ENCODE measurements at regions of chr5 and their contacts with region 1.

Region 1: DNA sequence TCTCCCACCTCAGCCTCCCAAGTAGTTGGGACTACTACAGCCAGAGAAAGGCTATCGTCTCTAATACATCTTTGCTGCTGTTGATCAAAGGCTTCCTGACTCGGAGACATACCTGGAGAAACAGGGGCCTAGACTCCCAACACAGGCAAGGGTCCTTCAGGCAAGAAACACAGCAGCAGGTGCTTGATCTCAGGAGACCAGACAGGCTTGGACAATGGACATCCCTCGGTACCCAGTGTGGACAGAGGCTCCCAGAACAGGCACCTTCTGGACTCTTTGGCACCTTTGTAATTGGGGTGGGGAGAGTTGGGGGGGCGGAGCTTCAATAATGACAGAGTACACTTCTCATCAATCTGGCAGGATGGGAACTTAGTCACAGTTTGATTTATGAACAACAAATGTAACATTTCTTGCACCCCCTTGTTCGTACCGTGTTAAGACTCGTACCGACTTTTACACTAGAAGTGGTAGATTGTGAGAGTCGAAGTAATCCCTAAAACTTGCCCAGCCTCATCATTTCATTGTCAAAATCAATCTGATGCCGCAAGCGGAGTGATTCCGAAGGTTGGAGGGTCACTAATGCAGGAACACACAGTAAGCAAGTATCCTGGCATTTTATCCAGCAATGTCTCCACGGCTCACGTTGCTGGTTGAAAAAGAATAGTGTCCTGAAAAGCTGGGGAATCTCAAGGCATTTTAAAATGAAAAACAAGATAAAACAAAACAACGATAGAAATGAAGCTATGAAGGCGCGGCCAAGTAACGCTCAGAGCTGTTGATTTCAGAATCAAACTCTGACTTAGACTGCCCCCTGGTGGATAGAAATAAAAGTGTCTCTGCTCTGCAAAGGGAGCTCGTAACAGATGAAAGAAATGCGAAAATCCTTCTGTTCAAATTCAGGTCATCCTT is 46.4 kb upstream of the STK32A start:
- DNase-seq: peak in 7 of 9 experiments; percentile 2 to 73 (median 33)
- ATAC-seq: peak; percentile 59
- H3K4me3 ChIP-seq: no peak overlapping the region
- H3K4me3 Mint-ChIP-seq: no peak overlapping the region
- H3K27ac ChIP-seq: no peak overlapping the region
- H3K27ac Mint-ChIP-seq: no peak overlapping the region
- H3K4me1 ChIP-seq: no peaks in the 10 kb centered on the region
- H3K4me1 Mint-ChIP-seq: peaks cover 6% of the 10 kb centered on the region
- H3K27me3 ChIP-seq: no peaks in the 10 kb centered on the region
- H3K27me3 Mint-ChIP-seq: peaks cover 10% of the 10 kb centered on the region
- CTCF ChIP-seq: peak; percentile 85

Region 2: DNA sequence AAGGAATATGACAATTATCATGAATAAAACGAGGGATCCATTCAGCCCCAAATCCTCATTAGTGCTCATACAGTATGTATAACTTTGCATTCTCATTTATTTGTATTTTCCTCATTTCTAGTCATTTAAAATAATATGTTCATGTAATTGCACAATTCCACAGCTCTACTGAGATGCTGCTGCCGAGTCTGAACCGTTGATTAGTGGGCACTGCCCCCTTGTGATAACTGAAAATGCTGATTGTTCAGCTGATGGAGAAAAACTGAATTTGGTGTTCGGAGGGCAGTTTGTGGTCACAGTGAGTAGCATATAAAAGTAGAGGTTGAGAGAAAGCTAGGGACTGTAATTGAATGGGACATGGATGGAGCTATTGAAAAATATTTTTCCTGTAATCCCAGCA is 660.2 kb before region 1 on chr5:
- CTCF ChIA-PET with region 1: interaction called, 16 read pairs
- POLR2A ChIA-PET with region 1: no interaction called
- intact Hi-C with region 1: loop called (anchors 1 kb)
- DNase-seq: no peak
- ATAC-seq: no peak
- H3K4me3 ChIP-seq: no peak overlapping the region
- H3K4me3 Mint-ChIP-seq: no peak overlapping the region
- H3K27ac ChIP-seq: no peak overlapping the region
- H3K27ac Mint-ChIP-seq: no peak overlapping the region
- H3K4me1 ChIP-seq: no peaks in the 10 kb centered on the region
- H3K4me1 Mint-ChIP-seq: peaks cover under 1% of the 10 kb centered on the region
- H3K27me3 ChIP-seq: no peaks in the 10 kb centered on the region
- H3K27me3 Mint-ChIP-seq: peaks cover 2% of the 10 kb centered on the region
- CTCF ChIP-seq: no peak

Region 3: DNA sequence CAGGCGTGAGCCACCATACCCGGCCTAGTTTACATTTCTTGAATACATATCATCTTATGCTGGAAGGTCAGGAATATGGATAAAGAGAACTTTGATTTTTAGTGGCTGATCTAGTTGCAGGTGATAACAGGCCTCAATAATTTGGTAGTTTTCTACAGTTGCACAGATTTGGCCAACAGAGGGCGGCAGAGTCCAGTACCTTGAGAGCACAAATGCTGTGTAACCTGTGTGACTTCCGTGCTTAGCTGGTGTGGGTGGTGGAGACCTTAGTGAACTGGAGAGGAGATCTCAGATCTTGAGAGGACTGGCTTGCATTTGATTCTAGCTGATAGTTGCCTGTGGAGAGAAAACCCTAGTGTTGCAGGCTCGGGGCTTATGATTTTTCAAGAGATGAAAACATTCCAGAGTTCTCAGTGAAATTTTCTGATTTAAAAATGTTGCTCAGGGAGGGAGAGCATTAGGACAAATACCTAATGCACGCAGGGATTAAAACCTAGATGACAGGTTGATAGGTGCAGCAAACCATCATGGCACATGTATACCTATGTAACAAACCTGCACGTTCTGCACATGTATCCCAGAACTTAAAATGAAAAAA is 655.1 kb before region 1 on chr5:
- CTCF ChIA-PET with region 1: interaction called, 16 read pairs
- POLR2A ChIA-PET with region 1: no interaction called
- intact Hi-C with region 1: loop called (anchors 1 kb)
- DNase-seq: peak; percentile 51 to 79 (median 71)
- ATAC-seq: peak; percentile 85
- H3K4me3 ChIP-seq: no peak overlapping the region
- H3K4me3 Mint-ChIP-seq: no peak overlapping the region
- H3K27ac ChIP-seq: no peak overlapping the region
- H3K27ac Mint-ChIP-seq: no peak overlapping the region
- H3K4me1 ChIP-seq: no peaks in the 10 kb centered on the region
- H3K4me1 Mint-ChIP-seq: peaks cover 3% of the 10 kb centered on the region
- H3K27me3 ChIP-seq: no peaks in the 10 kb centered on the region
- H3K27me3 Mint-ChIP-seq: peaks cover under 1% of the 10 kb centered on the region
- CTCF ChIP-seq: peak; percentile 70

Region 4: GRCh38 chr5:146541958-146542849 is 646.2 kb before region 1 on chr5:
- CTCF ChIA-PET with region 1: interaction called, 51 read pairs
- POLR2A ChIA-PET with region 1: no interaction called
- intact Hi-C with region 1: no loop called
- DNase-seq: peak; percentile 46 to 80 (median 67)
- ATAC-seq: peak; percentile 85
- H3K4me3 ChIP-seq: no peak overlapping the region
- H3K4me3 Mint-ChIP-seq: no peak overlapping the region
- H3K27ac ChIP-seq: no peak overlapping the region
- H3K27ac Mint-ChIP-seq: no peak overlapping the region
- H3K4me1 ChIP-seq: no peaks in the 10 kb centered on the region
- H3K4me1 Mint-ChIP-seq: no peaks in the 10 kb centered on the region
- H3K27me3 ChIP-seq: no peaks in the 10 kb centered on the region
- H3K27me3 Mint-ChIP-seq: no peaks in the 10 kb centered on the region
- CTCF ChIP-seq: peak; percentile 95

Region 5: GRCh38 chr5:147113967-147114366 is 74.5 kb before region 1 on chr5:
- CTCF ChIA-PET with region 1: no interaction called
- POLR2A ChIA-PET with region 1: no interaction called
- intact Hi-C with region 1: no loop called
- DNase-seq: no peak
- ATAC-seq: no peak
- H3K4me3 ChIP-seq: no peak overlapping the region
- H3K4me3 Mint-ChIP-seq: no peak overlapping the region
- H3K27ac ChIP-seq: no peak overlapping the region
- H3K27ac Mint-ChIP-seq: no peak overlapping the region
- H3K4me1 ChIP-seq: no peaks in the 10 kb centered on the region
- H3K4me1 Mint-ChIP-seq: no peaks in the 10 kb centered on the region
- H3K27me3 ChIP-seq: no peaks in the 10 kb centered on the region
- H3K27me3 Mint-ChIP-seq: no peaks in the 10 kb centered on the region
- CTCF ChIP-seq: no peak

Region 6: GRCh38 chr5:147200001-147200400 is 11.5 kb after region 1 on chr5:
- CTCF ChIA-PET with region 1: interaction called, 40 read pairs
- POLR2A ChIA-PET with region 1: no interaction called
- intact Hi-C with region 1: no loop called
- DNase-seq: no peak
- ATAC-seq: no peak
- H3K4me3 ChIP-seq: no peak overlapping the region
- H3K4me3 Mint-ChIP-seq: no peak overlapping the region
- H3K27ac ChIP-seq: no peak overlapping the region
- H3K27ac Mint-ChIP-seq: no peak overlapping the region
- H3K4me1 ChIP-seq: no peaks in the 10 kb centered on the region
- H3K4me1 Mint-ChIP-seq: no peaks in the 10 kb centered on the region
- H3K27me3 ChIP-seq: no peaks in the 10 kb centered on the region
- H3K27me3 Mint-ChIP-seq: peaks cover 9% of the 10 kb centered on the region
- CTCF ChIP-seq: no peak

Measured in CD8-positive, alpha-beta T cell (primary cell).